Activated naive CD4-positive, alpha-beta T cell treated with anti-CD3 and anti-CD28 coated beads for 36 hours (primary cell): ENCODE measurements at regions of chr3 and their contacts with region 1.

Region 1: GRCh38 chr3:9932843-9933560 is 632 bp upstream of the CRELD1 start:
- DNase-seq: peak; percentile 92
- H3K4me3 Mint-ChIP-seq: peak overlapping the region; percentile 90
- H3K27ac Mint-ChIP-seq: peak overlapping the region; percentile 85
- H3K4me1 Mint-ChIP-seq: peaks cover 28% of the 10 kb centered on the region
- H3K27me3 Mint-ChIP-seq: no peaks in the 10 kb centered on the region

Region 2: DNA sequence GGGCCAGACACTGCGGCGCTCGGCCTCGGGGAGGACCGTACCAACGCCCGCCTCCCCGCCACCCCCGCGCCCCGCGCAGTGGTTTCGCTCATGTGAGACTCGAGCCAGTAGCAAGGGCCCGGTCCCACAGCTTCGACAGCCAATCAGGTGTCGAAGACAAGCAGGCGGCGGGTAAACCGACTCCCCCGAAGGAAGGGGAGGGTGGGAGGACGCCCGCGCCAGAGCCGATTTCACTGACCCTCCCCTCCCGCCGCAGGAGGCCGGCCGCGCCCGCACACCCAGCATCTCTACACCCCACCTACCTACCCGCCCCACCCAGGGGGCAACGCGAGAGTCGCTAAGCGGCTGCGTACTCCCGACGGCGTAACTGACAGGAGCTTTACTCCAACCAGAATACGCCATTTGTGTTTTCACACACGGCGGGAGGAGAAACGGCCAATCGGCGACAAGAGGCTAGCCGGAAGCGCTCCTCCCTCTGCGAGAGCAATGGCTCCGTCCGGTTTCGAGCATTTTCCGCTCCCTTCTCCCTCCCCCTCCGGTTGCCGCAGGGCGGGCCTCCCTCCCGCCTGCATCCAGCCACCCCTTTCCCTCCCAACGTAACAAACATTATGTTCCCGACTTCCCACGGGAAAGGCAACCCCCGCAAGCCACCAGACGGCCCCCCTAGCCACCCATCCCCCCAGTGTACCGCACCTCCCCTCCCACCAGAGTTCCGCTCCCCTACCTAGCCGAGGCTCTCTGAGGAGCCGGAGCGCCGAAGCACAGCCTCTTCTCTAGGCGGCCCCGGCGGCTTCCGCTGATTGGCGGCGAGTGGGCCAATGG is 536.1 kb before region 1 on chr3:
- CTCF ChIA-PET with region 1: no interaction called
- intact Hi-C with region 1: loop called (anchors 2 kb)
- DNase-seq: peak; percentile 98
- H3K4me3 Mint-ChIP-seq: peak overlapping the region; percentile 91
- H3K27ac Mint-ChIP-seq: peak overlapping the region; percentile 96
- H3K4me1 Mint-ChIP-seq: peaks cover 65% of the 10 kb centered on the region
- H3K27me3 Mint-ChIP-seq: no peaks in the 10 kb centered on the region

Region 3: GRCh38 chr3:9749645-9750555 is 183.1 kb before region 1 on chr3 and contains the start of gene OGG1:
- CTCF ChIA-PET with region 1: interaction called, 6 read pairs
- intact Hi-C with region 1: loop called (anchors 1 kb)
- DNase-seq: peak; percentile 98
- H3K4me3 Mint-ChIP-seq: peak within 1 kb of the TSS; percentile 97
- H3K27ac Mint-ChIP-seq: peak within 1 kb of the TSS; percentile 94
- H3K4me1 Mint-ChIP-seq: peaks cover 50% of the 10 kb centered on the region
- H3K27me3 Mint-ChIP-seq: no peaks in the 10 kb centered on the region
- total RNA-seq, gene OGG1: 26.1 to 28.5 TPM

Region 4: GRCh38 chr3:9915254-9916141 is 17.5 kb before region 1 on chr3:
- CTCF ChIA-PET with region 1: interaction called, 19 read pairs
- intact Hi-C with region 1: no loop called
- DNase-seq: peak; percentile 47
- H3K4me3 Mint-ChIP-seq: peak overlapping the region; percentile 71
- H3K27ac Mint-ChIP-seq: no peak overlapping the region
- H3K4me1 Mint-ChIP-seq: peaks cover 13% of the 10 kb centered on the region
- H3K27me3 Mint-ChIP-seq: peaks cover 5% of the 10 kb centered on the region

Region 5: GRCh38 chr3:10026084-10026890 is 93.3 kb after region 1 on chr3 and contains the start of gene FANCD2:
- CTCF ChIA-PET with region 1: interaction called, 7 read pairs
- intact Hi-C with region 1: loop called (anchors 1 kb)
- DNase-seq: peak; percentile 94
- H3K4me3 Mint-ChIP-seq: peak within 1 kb of the TSS; percentile 92
- H3K27ac Mint-ChIP-seq: peak within 1 kb of the TSS; percentile 98
- H3K4me1 Mint-ChIP-seq: peaks cover 22% of the 10 kb centered on the region
- H3K27me3 Mint-ChIP-seq: no peaks in the 10 kb centered on the region
- total RNA-seq, gene FANCD2: 86.3 to 90.8 TPM

Region 6: GRCh38 chr3:10286596-10287330 is 353.8 kb after region 1 on chr3:
- CTCF ChIA-PET with region 1: no interaction called
- intact Hi-C with region 1: loop called (anchors 1 kb)
- DNase-seq: peak; percentile 67
- H3K4me3 Mint-ChIP-seq: no peak overlapping the region
- H3K27ac Mint-ChIP-seq: no peak overlapping the region
- H3K4me1 Mint-ChIP-seq: peaks cover 41% of the 10 kb centered on the region
- H3K27me3 Mint-ChIP-seq: no peaks in the 10 kb centered on the region